Activated CD4-positive, alpha-beta T cell treated with anti-CD3 and anti-CD28 coated beads for 36 hours (primary cell): ENCODE measurements at regions of chr22 and their contacts with region 1.

Region 1: GRCh38 chr22:37643225-37643847 is 3.9 kb downstream of the SH3BP1 start:
- DNase-seq: peak; percentile 93
- ATAC-seq: peak; percentile 79
- H3K4me3 Mint-ChIP-seq: no peak overlapping the region
- H3K27ac Mint-ChIP-seq: peak overlapping the region; percentile 75
- H3K4me1 Mint-ChIP-seq: peaks cover 37% of the 10 kb centered on the region
- H3K27me3 Mint-ChIP-seq: no peaks in the 10 kb centered on the region

Region 2: GRCh38 chr22:37623075-37624016 is 20.0 kb before region 1 on chr22:
- CTCF ChIA-PET with region 1: interaction called, 41 read pairs
- POLR2A ChIA-PET with region 1: interaction called, 5 read pairs
- intact Hi-C with region 1: loop called in 1 of 2 experiments (anchors 1 kb)
- DNase-seq: peak; percentile 88
- ATAC-seq: peak; percentile 83
- H3K4me3 Mint-ChIP-seq: no peak overlapping the region
- H3K27ac Mint-ChIP-seq: peak overlapping the region; percentile 89
- H3K4me1 Mint-ChIP-seq: peaks cover 43% of the 10 kb centered on the region
- H3K27me3 Mint-ChIP-seq: no peaks in the 10 kb centered on the region

Region 3: GRCh38 chr22:37686002-37686982 is 43.0 kb after region 1 on chr22 and contains the start of gene NOL12:
- CTCF ChIA-PET with region 1: interaction called, 79 read pairs
- POLR2A ChIA-PET with region 1: interaction called, 5 read pairs
- intact Hi-C with region 1: loop called (anchors 1 kb)
- DNase-seq: peak; percentile 84
- ATAC-seq: peak; percentile 82
- H3K4me3 Mint-ChIP-seq: peak within 1 kb of the TSS; percentile 90
- H3K27ac Mint-ChIP-seq: peak within 1 kb of the TSS; percentile 98
- H3K4me1 Mint-ChIP-seq: peaks cover 27% of the 10 kb centered on the region
- H3K27me3 Mint-ChIP-seq: no peaks in the 10 kb centered on the region
- total RNA-seq, gene NOL12: 37.1 to 42.3 TPM

Region 4: DNA sequence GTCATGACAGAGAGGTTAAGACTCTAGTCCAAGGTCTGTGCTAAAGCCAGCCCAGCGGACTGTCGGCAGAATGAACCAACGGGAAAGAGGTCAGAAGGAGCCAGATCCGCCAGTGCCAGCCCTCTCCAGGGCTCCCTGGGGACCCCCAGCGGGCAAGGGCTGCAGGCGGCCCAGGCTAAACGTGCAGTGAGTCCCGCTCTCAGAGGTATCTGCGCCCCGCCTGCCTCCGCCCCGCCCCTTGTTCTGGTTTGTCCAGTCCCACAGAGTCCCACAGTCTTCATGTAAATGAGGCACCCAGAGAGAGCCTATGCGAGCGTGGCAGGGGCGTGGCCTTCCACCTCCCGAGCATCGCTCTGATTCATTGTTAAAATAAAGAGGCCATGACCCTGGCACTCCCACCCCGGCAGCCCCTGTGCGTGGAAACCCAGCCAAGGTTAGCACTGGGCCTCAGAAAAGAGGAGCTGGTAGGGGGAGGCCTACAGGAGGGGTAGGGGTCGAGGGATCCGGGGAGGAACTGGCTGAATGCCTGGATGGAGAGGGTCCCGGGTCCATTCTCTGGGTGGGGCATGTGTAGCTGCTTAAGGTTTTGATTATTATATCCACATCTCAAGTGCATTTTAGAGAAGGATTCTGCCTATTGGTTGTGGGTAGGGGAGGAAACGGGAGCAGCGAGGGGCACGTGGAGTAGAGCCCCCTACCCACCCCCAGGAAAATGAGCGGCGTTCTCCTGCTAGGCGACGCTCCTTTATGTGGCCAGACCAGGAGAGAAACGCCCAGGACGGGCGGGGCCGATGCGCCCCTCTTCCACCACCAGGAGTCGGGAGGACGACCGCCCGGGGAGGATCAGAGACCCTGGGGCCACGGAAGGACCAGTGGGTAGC is 53.6 kb after region 1 on chr22 and contains the start of gene TRIOBP:
- CTCF ChIA-PET with region 1: interaction called, 23 read pairs
- POLR2A ChIA-PET with region 1: no interaction called
- intact Hi-C with region 1: no loop called
- DNase-seq: peak; percentile 98
- ATAC-seq: peak; percentile 99
- H3K4me3 Mint-ChIP-seq: peak within 1 kb of the TSS; percentile 71
- H3K27ac Mint-ChIP-seq: peak within 1 kb of the TSS; percentile 67
- H3K4me1 Mint-ChIP-seq: peaks cover 17% of the 10 kb centered on the region
- H3K27me3 Mint-ChIP-seq: no peaks in the 10 kb centered on the region
- total RNA-seq, gene TRIOBP: 23.3 to 26.1 TPM

Region 5: DNA sequence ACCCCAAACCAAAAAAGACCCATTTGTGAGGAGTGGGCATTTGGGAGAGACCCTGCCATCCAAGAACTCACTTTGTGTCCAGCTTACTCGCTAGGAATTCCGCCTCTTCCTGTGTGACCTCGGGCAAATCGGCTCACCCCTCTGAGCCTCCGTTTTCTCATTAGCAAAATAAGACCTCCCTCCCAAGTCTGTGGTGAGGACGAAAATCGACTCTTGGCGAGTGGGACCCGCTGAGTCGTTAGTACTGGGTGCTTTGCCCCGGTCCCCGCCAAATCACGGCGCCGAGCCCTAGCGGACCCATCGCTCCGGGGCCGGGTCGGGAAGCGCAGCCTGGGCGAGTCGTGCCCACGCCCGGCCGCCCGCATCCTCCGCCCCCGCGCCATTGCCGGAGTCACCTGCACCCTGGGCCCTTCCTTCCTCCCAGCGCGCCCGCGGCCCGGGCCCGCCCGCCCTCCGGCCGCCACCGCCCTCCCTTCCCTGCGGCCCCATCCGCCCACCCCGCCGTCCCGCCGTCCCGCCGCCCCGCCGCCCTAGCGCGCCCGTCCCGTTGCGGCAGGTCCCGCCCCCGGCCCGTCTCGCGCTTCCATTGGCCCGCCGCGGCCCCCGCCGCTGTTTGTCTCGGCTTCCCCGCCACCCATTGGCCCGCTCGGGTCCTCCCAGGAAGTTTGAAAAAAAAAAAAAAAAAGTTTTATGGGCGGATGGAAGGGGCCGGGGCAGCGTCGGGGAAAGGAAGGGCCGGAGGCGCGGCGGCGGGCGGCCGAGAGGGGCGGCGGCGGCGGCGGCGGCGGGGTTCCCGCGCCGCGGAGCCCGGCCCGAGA is 102.4 kb after region 1 on chr22:
- CTCF ChIA-PET with region 1: interaction called, 4 read pairs
- POLR2A ChIA-PET with region 1: no interaction called
- intact Hi-C with region 1: loop called in 1 of 2 experiments (anchors 5 kb)
- DNase-seq: peak; percentile 95
- ATAC-seq: peak; percentile 91
- H3K4me3 Mint-ChIP-seq: peak overlapping the region; percentile 84
- H3K27ac Mint-ChIP-seq: peak overlapping the region; percentile 90
- H3K4me1 Mint-ChIP-seq: peaks cover 25% of the 10 kb centered on the region
- H3K27me3 Mint-ChIP-seq: no peaks in the 10 kb centered on the region

Region 6: GRCh38 chr22:37982938-37983859 is 339.9 kb after region 1 on chr22:
- CTCF ChIA-PET with region 1: no interaction called
- POLR2A ChIA-PET with region 1: no interaction called
- intact Hi-C with region 1: no loop called
- DNase-seq: no peak
- ATAC-seq: no peak
- H3K4me3 Mint-ChIP-seq: no peak overlapping the region
- H3K27ac Mint-ChIP-seq: no peak overlapping the region
- H3K4me1 Mint-ChIP-seq: no peaks in the 10 kb centered on the region
- H3K27me3 Mint-ChIP-seq: no peaks in the 10 kb centered on the region